ENCODE measurements at regions of chr1 and their contacts with region 1.

Region 1: DNA sequence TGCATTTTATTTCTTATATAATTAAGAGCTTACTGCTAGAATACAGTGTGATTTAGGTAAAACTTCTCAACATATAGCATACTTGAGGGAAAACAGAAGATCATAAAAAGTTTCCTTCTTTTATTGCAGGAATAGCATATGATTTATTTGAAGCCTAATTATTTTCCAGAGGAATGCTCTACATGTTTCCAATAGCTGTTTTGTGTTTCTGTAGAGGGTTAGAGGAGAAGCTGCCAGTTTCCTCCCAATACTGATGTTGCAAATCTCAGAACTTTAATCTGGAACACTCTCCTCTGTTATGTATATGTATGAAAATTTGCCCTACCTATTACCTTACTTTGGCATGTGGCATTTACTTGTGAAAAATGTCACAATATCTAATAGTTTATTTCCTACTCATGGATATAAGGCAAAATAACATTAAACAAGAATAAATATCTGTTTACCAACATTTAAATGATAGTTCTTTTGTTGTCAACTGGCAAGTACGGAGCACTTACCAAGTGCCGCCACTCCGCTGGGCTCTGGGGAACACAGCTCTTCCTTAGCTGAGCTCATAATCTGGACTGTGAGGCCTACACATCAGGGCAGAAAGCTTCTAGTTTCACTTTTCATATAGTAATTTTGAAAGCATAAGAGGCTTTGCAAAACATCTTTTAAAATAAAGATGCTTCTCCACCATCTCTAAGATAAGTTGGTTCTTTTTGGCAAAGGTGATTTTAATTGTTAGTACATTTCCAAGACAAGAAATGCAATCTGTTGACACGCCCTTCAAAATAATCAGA is 239.8 kb upstream of the C1orf105 start:
- DNase-seq: peak in 8 of 9 donors; percentile 18 to 50 (median 40)
- ATAC-seq: peak; percentile 72
- H3K4me3 ChIP-seq: peak overlapping the region; percentile 56
- H3K4me3 Mint-ChIP-seq: peak overlapping the region; percentile 61 to 91 (median 82)
- H3K27ac ChIP-seq: peak overlapping the region; percentile 80
- H3K27ac Mint-ChIP-seq: peak overlapping the region; percentile 95 to 99 (median 97)
- H3K4me1 ChIP-seq: peaks cover 21 to 23% of the 10 kb centered on the region in 2 donors
- H3K4me1 Mint-ChIP-seq: peaks cover 26 to 59% (median 45%) of the 10 kb centered on the region in 7 donors
- H3K27me3 ChIP-seq: no peaks in the 10 kb centered on the region
- H3K27me3 Mint-ChIP-seq: no peaks in the 10 kb centered on the region

Region 2: GRCh38 chr1:172002725-172003345 is 177.9 kb before region 1 on chr1:
- CTCF ChIA-PET with region 1: no interaction called
- POLR2A ChIA-PET with region 1: no interaction called
- intact Hi-C with region 1: loop called in 1 of 2 experiments (anchors 5 kb)
- DNase-seq: peak in 7 of 9 donors; percentile 8 to 53 (median 37)
- ATAC-seq: peak; percentile 55
- H3K4me3 ChIP-seq: no peak overlapping the region
- H3K4me3 Mint-ChIP-seq: no peak overlapping the region
- H3K27ac ChIP-seq: no peak overlapping the region
- H3K27ac Mint-ChIP-seq: no peak overlapping the region
- H3K4me1 ChIP-seq: no peaks in the 10 kb centered on the region
- H3K4me1 Mint-ChIP-seq: peaks cover 0 to 8% (median 3%) of the 10 kb centered on the region in 7 donors
- H3K27me3 ChIP-seq: no peaks in the 10 kb centered on the region
- H3K27me3 Mint-ChIP-seq: no peaks in the 10 kb centered on the region

Region 3: GRCh38 chr1:172135076-172135672 is 45.5 kb before region 1 on chr1:
- CTCF ChIA-PET with region 1: no interaction called
- POLR2A ChIA-PET with region 1: interaction called, 3 read pairs
- intact Hi-C with region 1: loop called in 1 of 2 experiments (anchors 5 kb)
- DNase-seq: peak in 6 of 9 donors; percentile 9 to 37 (median 22)
- ATAC-seq: peak; percentile 48
- H3K4me3 ChIP-seq: no peak overlapping the region
- H3K4me3 Mint-ChIP-seq: no peak overlapping the region
- H3K27ac ChIP-seq: no peak overlapping the region
- H3K27ac Mint-ChIP-seq: no peak overlapping the region
- H3K4me1 ChIP-seq: no peaks in the 10 kb centered on the region
- H3K4me1 Mint-ChIP-seq: peaks cover 0 to 12% (median 0%) of the 10 kb centered on the region in 7 donors
- H3K27me3 ChIP-seq: no peaks in the 10 kb centered on the region
- H3K27me3 Mint-ChIP-seq: no peaks in the 10 kb centered on the region

Region 4: GRCh38 chr1:172203135-172203823 is 22.6 kb after region 1 on chr1:
- CTCF ChIA-PET with region 1: no interaction called
- POLR2A ChIA-PET with region 1: no interaction called
- intact Hi-C with region 1: loop called in 1 of 2 experiments (anchors 2 kb)
- DNase-seq: no peak
- ATAC-seq: no peak
- H3K4me3 ChIP-seq: no peak overlapping the region
- H3K4me3 Mint-ChIP-seq: no peak overlapping the region
- H3K27ac ChIP-seq: no peak overlapping the region
- H3K27ac Mint-ChIP-seq: no peak overlapping the region
- H3K4me1 ChIP-seq: no peaks in the 10 kb centered on the region
- H3K4me1 Mint-ChIP-seq: peaks cover 0 to 5% (median 0%) of the 10 kb centered on the region in 7 donors
- H3K27me3 ChIP-seq: no peaks in the 10 kb centered on the region
- H3K27me3 Mint-ChIP-seq: peaks cover 0 to 6% (median 0%) of the 10 kb centered on the region in 5 donors

Region 5: GRCh38 chr1:172357753-172358385 is 177.2 kb after region 1 on chr1:
- CTCF ChIA-PET with region 1: no interaction called
- POLR2A ChIA-PET with region 1: interaction called, 3 read pairs
- intact Hi-C with region 1: loop called (anchors 1 to 10 kb)
- DNase-seq: no peak
- ATAC-seq: peak; percentile 24
- H3K4me3 ChIP-seq: no peak overlapping the region
- H3K4me3 Mint-ChIP-seq: peak overlapping the region; percentile 60 to 76 (median 72)
- H3K27ac ChIP-seq: peak overlapping the region; percentile 58
- H3K27ac Mint-ChIP-seq: peak overlapping the region; percentile 67 to 93 (median 90)
- H3K4me1 ChIP-seq: peaks cover 25 to 40% of the 10 kb centered on the region in 2 donors
- H3K4me1 Mint-ChIP-seq: peaks cover 8 to 56% (median 34%) of the 10 kb centered on the region in 7 donors
- H3K27me3 ChIP-seq: no peaks in the 10 kb centered on the region
- H3K27me3 Mint-ChIP-seq: no peaks in the 10 kb centered on the region

Region 6: DNA sequence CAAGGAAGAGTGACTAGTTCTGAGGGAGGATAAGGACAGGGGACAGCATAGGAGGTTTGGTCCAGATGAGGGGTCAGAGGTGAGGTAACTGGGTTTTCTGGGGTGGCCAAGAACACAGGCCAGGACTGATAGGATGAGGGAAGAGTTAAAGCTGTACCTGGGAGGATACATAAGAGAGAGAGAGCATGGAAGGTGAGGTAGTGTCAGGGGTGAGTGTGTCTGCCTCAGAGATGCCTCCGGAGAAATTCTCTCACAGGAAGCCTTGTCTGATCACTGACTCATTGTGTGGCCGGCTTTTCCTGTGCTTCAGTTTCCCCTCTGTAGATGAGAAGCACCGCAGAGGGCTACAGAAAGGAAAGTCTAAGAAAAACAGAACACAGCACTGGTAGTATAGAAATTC is 518.4 kb after region 1 on chr1:
- CTCF ChIA-PET with region 1: no interaction called
- POLR2A ChIA-PET with region 1: no interaction called
- intact Hi-C with region 1: loop called in 1 of 2 experiments (anchors 10 kb)
- DNase-seq: peak; percentile 13 to 76 (median 65)
- ATAC-seq: peak; percentile 92
- H3K4me3 ChIP-seq: peak overlapping the region; percentile 37
- H3K4me3 Mint-ChIP-seq: peak overlapping the region; percentile 61 to 81 (median 76)
- H3K27ac ChIP-seq: peak overlapping the region; percentile 44
- H3K27ac Mint-ChIP-seq: peak overlapping the region in 7 of 9 donors; percentile 87 to 98 (median 92)
- H3K4me1 ChIP-seq: peaks cover 77 to 80% of the 10 kb centered on the region in 2 donors
- H3K4me1 Mint-ChIP-seq: peaks cover 0 to 53% (median 0%) of the 10 kb centered on the region in 7 donors
- H3K27me3 ChIP-seq: no peaks in the 10 kb centered on the region
- H3K27me3 Mint-ChIP-seq: no peaks in the 10 kb centered on the region